Activated CD4-positive, alpha-beta memory T cell treated with anti-CD3 and anti-CD28 coated beads for 36 hours (primary cell): ENCODE measurements at regions of chr6 and their contacts with region 1.

Region 1: GRCh38 chr6:27132532-27133280 is 114.8 kb upstream of the PRSS16 start:
- DNase-seq: peak; percentile 95
- H3K4me3 Mint-ChIP-seq: no peak overlapping the region
- H3K27ac Mint-ChIP-seq: no peak overlapping the region
- H3K4me1 Mint-ChIP-seq: peaks cover 16% of the 10 kb centered on the region
- H3K27me3 Mint-ChIP-seq: peaks cover 2% of the 10 kb centered on the region

Region 2: GRCh38 chr6:26045065-26045927 is 1087.4 kb before region 1 on chr6:
- CTCF ChIA-PET with region 1: no interaction called
- POLR2A ChIA-PET with region 1: interaction called, 8 read pairs
- intact Hi-C with region 1: loop called (anchors 2 kb)
- DNase-seq: peak; percentile 81
- H3K4me3 Mint-ChIP-seq: peak overlapping the region; percentile 81
- H3K27ac Mint-ChIP-seq: peak overlapping the region; percentile 97
- H3K4me1 Mint-ChIP-seq: peaks cover 17% of the 10 kb centered on the region
- H3K27me3 Mint-ChIP-seq: peaks cover 8% of the 10 kb centered on the region

Region 3: GRCh38 chr6:26216356-26216885 is 916.3 kb before region 1 on chr6:
- CTCF ChIA-PET with region 1: no interaction called
- POLR2A ChIA-PET with region 1: interaction called, 4 read pairs
- intact Hi-C with region 1: loop called (anchors 5 kb)
- DNase-seq: peak; percentile 89
- H3K4me3 Mint-ChIP-seq: no peak overlapping the region
- H3K27ac Mint-ChIP-seq: no peak overlapping the region
- H3K4me1 Mint-ChIP-seq: peaks cover 5% of the 10 kb centered on the region
- H3K27me3 Mint-ChIP-seq: no peaks in the 10 kb centered on the region

Region 4: GRCh38 chr6:26285143-26286134 is 847.3 kb before region 1 on chr6:
- CTCF ChIA-PET with region 1: no interaction called
- POLR2A ChIA-PET with region 1: no interaction called
- intact Hi-C with region 1: loop called (anchors 5 kb)
- DNase-seq: peak; percentile 98
- H3K4me3 Mint-ChIP-seq: peak overlapping the region; percentile 92
- H3K27ac Mint-ChIP-seq: peak overlapping the region; percentile 96
- H3K4me1 Mint-ChIP-seq: peaks cover 16% of the 10 kb centered on the region
- H3K27me3 Mint-ChIP-seq: peaks cover 5% of the 10 kb centered on the region

Region 5: GRCh38 chr6:26322645-26323482 is 809.8 kb before region 1 on chr6:
- CTCF ChIA-PET with region 1: no interaction called
- POLR2A ChIA-PET with region 1: no interaction called
- intact Hi-C with region 1: no loop called
- DNase-seq: peak; percentile 64
- H3K4me3 Mint-ChIP-seq: peak overlapping the region; percentile 82
- H3K27ac Mint-ChIP-seq: peak overlapping the region; percentile 80
- H3K4me1 Mint-ChIP-seq: peaks cover 21% of the 10 kb centered on the region
- H3K27me3 Mint-ChIP-seq: peaks cover 25% of the 10 kb centered on the region

Region 6: GRCh38 chr6:27251606-27252251 is 119.0 kb after region 1 on chr6:
- CTCF ChIA-PET with region 1: no interaction called
- POLR2A ChIA-PET with region 1: no interaction called
- intact Hi-C with region 1: no loop called
- DNase-seq: peak; percentile 88
- H3K4me3 Mint-ChIP-seq: peak overlapping the region; percentile 79
- H3K27ac Mint-ChIP-seq: peak overlapping the region; percentile 28
- H3K4me1 Mint-ChIP-seq: peaks cover 11% of the 10 kb centered on the region
- H3K27me3 Mint-ChIP-seq: peaks cover 45% of the 10 kb centered on the region

Region 7: GRCh38 chr6:27479319-27480182 is 346.8 kb after region 1 on chr6:
- CTCF ChIA-PET with region 1: no interaction called
- POLR2A ChIA-PET with region 1: interaction called, 3 read pairs
- intact Hi-C with region 1: loop called (anchors 5 kb)
- DNase-seq: peak; percentile 89
- H3K4me3 Mint-ChIP-seq: no peak overlapping the region
- H3K27ac Mint-ChIP-seq: no peak overlapping the region
- H3K4me1 Mint-ChIP-seq: peaks cover 5% of the 10 kb centered on the region
- H3K27me3 Mint-ChIP-seq: no peaks in the 10 kb centered on the region

Region 8: GRCh38 chr6:27864906-27865849 is 732.5 kb after region 1 on chr6:
- CTCF ChIA-PET with region 1: no interaction called
- POLR2A ChIA-PET with region 1: interaction called, 47 read pairs
- intact Hi-C with region 1: loop called (anchors 1 kb)
- DNase-seq: peak; percentile 85
- H3K4me3 Mint-ChIP-seq: peak overlapping the region; percentile 96
- H3K27ac Mint-ChIP-seq: peak overlapping the region; percentile 100
- H3K4me1 Mint-ChIP-seq: peaks cover 38% of the 10 kb centered on the region
- H3K27me3 Mint-ChIP-seq: peaks cover 20% of the 10 kb centered on the region